Dorsolateral prefrontal cortex (tissue), 120 donors: ENCODE measurements at regions of chrX and their contacts with region 1.

Region 1: DNA sequence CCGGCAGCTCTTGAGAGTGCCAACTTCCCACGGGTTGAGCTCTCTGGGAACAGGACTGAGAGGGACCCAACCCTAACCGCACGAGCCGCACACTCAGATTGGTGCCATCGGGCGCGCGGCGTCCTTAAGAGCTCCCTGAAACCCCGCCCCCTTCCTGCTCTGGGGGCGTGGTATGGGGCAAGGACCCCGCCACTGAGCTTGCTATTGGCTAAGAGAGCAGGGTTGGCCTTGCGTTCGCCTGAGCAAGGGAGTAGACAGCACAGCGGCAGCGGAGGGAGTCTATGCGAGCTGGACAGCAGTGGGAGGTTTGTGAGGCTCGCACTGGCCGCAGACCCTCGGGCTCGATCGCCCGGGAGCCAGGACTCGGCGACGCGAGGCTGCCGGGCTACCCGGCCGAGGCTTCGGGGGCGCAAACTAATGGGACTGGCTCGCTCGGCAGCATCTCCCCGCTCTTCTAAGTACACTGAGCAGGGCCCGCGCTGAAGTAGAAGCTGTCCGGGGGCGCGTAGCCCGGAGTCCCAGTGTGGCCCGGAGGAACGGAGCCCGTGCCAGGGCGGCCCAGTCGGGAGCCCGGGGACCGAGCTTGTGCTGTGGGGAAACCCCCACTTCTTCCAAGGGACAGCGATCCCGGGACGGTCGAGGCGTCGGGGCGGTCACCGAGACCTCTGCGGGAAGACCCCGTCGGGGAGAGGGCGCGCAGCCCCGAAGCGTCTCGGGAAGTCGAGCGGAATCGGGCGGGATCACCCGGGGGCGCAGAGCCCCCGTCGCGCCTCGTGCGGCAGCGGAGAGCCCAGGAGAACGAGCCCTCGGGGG is at the start of gene EFNB1:
- DNase-seq: peak; percentile 74 to 93 (median 90)
- H3K4me3 ChIP-seq: peak within 1 kb of the TSS; percentile 42 to 79 (median 67)
- H3K27ac ChIP-seq: peak within 1 kb of the TSS in 35 of 59 donors; percentile 0 to 82 (median 46)
- H3K27me3 ChIP-seq: peaks cover 0 to 96% (median 28%) of the 10 kb centered on the region in 45 donors
- CTCF ChIP-seq: peak in 15 of 56 donors; percentile 12 to 40 (median 24)
- total RNA-seq, gene EFNB1: 3.0 to 12.4 (median 6.2) TPM

Region 2: DNA sequence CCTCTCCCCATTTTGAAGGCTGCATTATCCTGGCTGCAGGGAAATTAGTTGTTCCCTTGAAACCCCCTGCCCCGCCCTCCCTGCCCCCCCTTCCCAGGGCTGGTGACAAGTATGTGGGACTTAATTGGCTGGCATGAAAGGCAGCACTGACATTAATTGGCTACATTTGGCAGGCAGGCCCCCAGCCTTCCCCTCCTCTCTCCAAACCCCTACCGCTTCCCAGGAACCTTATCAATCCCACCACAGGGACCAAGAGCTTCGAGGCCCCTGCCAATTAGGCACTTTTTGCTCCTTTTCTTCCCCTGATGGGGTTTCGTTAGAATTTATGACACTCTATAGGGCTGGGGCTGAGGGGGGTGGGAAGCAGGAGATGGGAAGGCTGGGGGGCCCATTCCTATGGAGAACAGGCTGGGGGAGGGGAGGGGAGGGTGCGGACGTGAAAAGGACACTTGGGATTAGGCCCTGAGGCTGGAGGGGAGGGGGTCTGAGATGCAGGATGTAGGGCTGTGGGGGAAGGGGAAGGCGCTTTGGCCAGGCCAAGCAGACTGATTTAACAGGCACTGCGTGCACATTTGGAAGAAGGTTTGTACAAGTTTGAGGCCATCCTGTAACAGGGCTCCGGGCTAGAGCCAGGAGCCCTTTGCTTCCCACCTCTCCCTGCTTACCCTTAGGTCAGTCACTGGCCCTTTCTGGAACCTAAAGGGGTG is 52.1 kb after region 1 on chrX:
- intact Hi-C with region 1: no loop called
- DNase-seq: no peak
- H3K4me3 ChIP-seq: no peak overlapping the region
- H3K27ac ChIP-seq: no peak overlapping the region
- H3K27me3 ChIP-seq: peaks cover 0 to 79% (median 16%) of the 10 kb centered on the region in 45 donors
- CTCF ChIP-seq: no peak

Region 3: DNA sequence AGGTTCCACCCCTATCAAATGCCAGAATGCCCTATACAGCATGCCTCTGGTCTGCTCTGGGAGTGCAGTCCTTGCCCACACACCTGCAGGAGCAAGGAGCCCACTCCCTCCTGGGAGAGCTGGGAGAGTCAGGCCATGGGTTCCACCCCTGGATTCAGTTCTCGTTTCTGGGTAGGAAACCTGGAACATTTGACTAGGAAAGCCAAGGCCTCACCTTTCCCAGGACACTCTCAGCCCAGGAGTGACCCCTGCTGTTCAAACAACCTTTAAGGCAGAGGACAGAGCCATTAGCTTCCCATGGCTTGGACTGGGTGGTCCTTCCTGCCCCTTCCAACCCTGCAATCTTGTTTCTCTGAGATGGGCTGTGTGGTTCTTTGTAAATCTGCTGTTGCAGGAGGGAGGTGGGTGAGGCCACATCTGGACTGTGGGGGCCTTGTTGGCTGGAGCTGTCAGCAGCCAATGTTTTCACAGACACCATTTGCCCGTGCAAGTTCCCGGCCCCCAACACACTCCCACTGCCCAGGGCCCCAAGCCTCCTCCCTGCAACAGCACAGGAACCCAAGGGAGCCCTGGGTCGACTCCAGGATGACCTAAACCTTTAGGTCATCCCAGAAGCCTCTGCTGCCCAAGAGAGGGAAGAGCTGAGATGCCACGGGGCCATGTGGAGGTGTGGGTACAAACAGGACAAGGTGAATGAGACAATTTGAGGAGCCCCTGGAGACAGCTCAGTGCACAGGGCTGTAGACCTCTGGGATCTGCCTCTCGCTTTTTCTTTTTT is 231.9 kb after region 1 on chrX:
- intact Hi-C with region 1: loop called in 1 of 2 experiments (anchors 10 kb)
- DNase-seq: no peak
- H3K4me3 ChIP-seq: no peak overlapping the region
- H3K27ac ChIP-seq: no peak overlapping the region
- H3K27me3 ChIP-seq: peaks cover 0 to 58% (median 12%) of the 10 kb centered on the region in 45 donors
- CTCF ChIP-seq: peak in 21 of 56 donors; percentile 6 to 47 (median 14)

Region 4: GRCh38 chrX:69222103-69223090 is 393.5 kb after region 1 on chrX:
- intact Hi-C with region 1: loop called (anchors 1 to 2 kb)
- DNase-seq: peak; percentile 50 to 83 (median 68)
- H3K4me3 ChIP-seq: peak overlapping the region in 1 of 59 donors; percentile 9
- H3K27ac ChIP-seq: no peak overlapping the region
- H3K27me3 ChIP-seq: peaks cover 0 to 79% (median 15%) of the 10 kb centered on the region in 45 donors
- CTCF ChIP-seq: peak; percentile 59 to 84 (median 77)

Region 5: GRCh38 chrX:69285881-69286564 is 457.1 kb after region 1 on chrX:
- intact Hi-C with region 1: loop called (anchors 1 to 5 kb)
- DNase-seq: peak in 8 of 10 donors; percentile 23 to 62 (median 52)
- H3K4me3 ChIP-seq: peak overlapping the region in 57 of 59 donors; percentile 9 to 66 (median 47)
- H3K27ac ChIP-seq: no peak overlapping the region
- H3K27me3 ChIP-seq: peaks cover 0 to 85% (median 17%) of the 10 kb centered on the region in 45 donors
- CTCF ChIP-seq: peak; percentile 36 to 90 (median 82)

Region 6: DNA sequence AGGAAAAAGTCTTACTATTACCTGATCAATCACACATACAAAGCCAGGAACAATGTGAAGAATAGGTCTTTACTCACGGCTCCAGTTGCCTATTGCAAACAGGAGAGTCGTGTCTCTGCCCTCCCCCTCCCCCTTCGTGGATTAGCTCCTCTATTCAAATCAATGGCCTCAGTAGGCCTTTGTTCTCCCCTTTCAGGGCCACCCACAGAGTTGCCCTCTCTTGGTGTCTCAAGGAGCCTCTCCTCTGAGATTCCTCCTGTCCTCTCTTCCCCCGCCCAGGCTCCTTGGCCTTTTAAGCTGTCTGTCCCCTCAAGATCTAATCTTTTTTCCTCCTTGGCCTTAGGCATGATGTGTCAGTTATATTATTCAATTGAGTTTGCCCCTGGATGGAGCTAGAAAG is 568.0 kb after region 1 on chrX:
- intact Hi-C with region 1: no loop called
- DNase-seq: no peak
- H3K4me3 ChIP-seq: no peak overlapping the region
- H3K27ac ChIP-seq: no peak overlapping the region
- H3K27me3 ChIP-seq: peaks cover 0 to 89% (median 26%) of the 10 kb centered on the region in 45 donors
- CTCF ChIP-seq: no peak